Activated CD8-positive, alpha-beta T cell treated with anti-CD3 and anti-CD28 coated beads for 36 hours (primary cell): ENCODE measurements at regions of chr1 and their contacts with region 1.

Region 1: GRCh38 chr1:21344750-21345443 is 54.6 kb upstream of the ECE1 start:
- DNase-seq: peak; percentile 35
- ATAC-seq: peak; percentile 11
- H3K4me3 Mint-ChIP-seq: peak overlapping the region; percentile 82
- H3K27ac Mint-ChIP-seq: peak overlapping the region; percentile 95
- H3K4me1 Mint-ChIP-seq: peaks cover 38% of the 10 kb centered on the region
- H3K27me3 Mint-ChIP-seq: no peaks in the 10 kb centered on the region
- CTCF ChIP-seq: no peak

Region 2: DNA sequence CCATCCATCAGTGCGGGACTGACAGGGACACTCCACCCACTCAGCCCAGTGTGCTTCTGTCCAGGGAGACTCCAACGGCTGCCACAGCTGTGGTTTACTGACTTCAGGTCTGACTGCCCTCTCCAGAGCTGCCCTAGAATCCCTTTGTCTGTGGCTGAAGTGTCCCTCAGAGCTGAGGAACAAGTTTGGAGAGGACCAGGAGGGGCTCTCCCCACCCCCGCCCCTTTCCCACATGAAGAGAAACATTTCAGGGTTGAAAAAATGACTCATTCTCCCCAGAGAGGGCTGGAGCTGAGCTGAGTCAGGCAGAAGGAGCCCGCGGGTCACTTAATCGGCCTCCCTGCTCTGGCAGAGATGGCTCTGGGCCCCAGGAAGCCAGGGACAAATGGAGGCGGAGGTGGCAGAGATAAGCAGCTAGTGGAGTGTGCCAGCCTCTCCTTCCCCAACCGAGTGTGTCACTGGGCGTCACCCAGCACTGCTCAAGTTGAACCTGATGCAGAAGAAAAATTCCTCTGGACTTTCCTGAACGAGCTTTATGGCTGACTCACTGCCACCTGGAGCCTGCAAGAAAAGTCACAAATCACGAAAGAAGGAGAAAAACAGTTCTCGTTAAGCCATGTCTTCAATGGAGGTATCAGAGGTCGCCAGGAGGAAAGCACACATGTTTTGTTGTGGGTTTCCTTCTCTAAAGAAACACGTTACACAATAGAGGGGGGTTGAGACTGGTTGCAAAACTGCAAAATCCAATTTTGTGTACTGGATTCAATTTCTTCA is 20.3 kb before region 1 on chr1:
- CTCF ChIA-PET with region 1: interaction called, 4 read pairs
- POLR2A ChIA-PET with region 1: interaction called, 30 read pairs
- intact Hi-C with region 1: no loop called
- DNase-seq: peak; percentile 91
- ATAC-seq: peak; percentile 86
- H3K4me3 Mint-ChIP-seq: peak overlapping the region; percentile 56
- H3K27ac Mint-ChIP-seq: peak overlapping the region; percentile 94
- H3K4me1 Mint-ChIP-seq: peaks cover 84% of the 10 kb centered on the region
- H3K27me3 Mint-ChIP-seq: no peaks in the 10 kb centered on the region
- CTCF ChIP-seq: no peak

Region 3: GRCh38 chr1:21334214-21335087 is 10.4 kb before region 1 on chr1:
- CTCF ChIA-PET with region 1: interaction called, 17 read pairs
- POLR2A ChIA-PET with region 1: interaction called, 10 read pairs
- intact Hi-C with region 1: no loop called
- DNase-seq: peak; percentile 90
- ATAC-seq: peak; percentile 90
- H3K4me3 Mint-ChIP-seq: peak overlapping the region; percentile 76
- H3K27ac Mint-ChIP-seq: peak overlapping the region; percentile 96
- H3K4me1 Mint-ChIP-seq: peaks cover 87% of the 10 kb centered on the region
- H3K27me3 Mint-ChIP-seq: no peaks in the 10 kb centered on the region
- CTCF ChIP-seq: peak; percentile 83

Region 4: DNA sequence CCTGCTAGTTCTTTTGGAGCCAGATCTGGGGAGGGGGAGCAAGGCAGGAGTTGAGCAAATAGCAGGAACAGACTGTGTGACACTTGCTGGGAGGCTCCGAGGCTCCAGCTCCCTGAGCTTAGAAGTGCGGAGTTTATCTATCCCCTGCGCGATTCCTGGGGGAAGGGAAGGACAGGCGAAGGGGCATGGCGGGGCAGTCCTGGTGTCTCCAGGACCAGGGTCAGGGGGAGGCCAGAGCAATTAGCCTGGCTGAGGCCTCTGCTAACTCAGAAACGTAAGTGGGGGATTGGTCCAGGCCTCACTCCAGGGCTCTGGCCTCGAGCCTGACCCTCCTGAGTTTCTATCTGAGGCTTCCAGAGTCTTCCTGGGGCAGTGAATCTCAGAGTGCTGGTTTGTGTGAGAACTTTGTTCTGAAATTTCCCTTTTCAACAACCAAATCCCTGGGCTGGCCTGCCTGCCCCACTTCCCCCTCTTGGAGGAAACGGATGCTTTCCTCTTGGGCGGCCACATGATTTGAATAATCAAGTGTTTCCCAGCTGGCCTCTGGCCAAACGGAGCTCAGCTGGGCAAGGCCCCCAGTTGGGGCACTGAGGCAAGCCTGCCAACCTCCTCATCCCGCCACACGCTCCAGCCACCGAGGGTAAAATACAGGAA is 179.9 kb after region 1 on chr1:
- CTCF ChIA-PET with region 1: no interaction called
- POLR2A ChIA-PET with region 1: no interaction called
- intact Hi-C with region 1: no loop called
- DNase-seq: no peak
- ATAC-seq: no peak
- H3K4me3 Mint-ChIP-seq: no peak overlapping the region
- H3K27ac Mint-ChIP-seq: no peak overlapping the region
- H3K4me1 Mint-ChIP-seq: no peaks in the 10 kb centered on the region
- H3K27me3 Mint-ChIP-seq: no peaks in the 10 kb centered on the region
- CTCF ChIP-seq: no peak